ENCODE measurements at regions of chr9 and their contacts with region 1.

Region 1: DNA sequence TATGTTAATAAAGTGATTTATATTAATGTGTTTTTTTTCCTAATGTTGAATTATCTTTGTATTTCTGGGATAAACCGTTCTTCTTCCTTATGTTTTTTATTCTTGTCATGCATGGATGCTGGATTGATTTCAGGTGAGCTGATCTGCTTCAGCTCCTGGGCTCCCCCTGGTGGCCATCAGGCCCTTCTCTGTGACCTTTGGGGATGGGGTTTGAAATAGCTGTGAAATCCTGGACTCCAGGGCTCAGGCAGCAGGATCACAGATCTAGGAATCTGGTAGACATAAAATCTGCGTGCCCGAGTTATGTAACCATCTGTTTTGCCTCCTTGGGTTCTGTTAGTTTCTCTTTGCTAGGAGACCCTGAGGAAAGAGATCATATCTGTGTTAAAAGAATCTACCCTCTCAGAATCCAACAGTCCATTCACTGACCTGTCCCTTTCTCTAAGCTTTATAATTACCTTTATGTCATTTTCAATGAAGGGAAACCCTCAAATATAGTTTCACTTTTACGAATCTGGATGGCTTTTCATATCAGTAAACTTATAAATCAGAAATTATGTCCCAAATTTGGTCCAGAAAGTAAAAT is 12.2 kb upstream of the OR13J1 start:
- DNase-seq: no peak
- H3K4me3 ChIP-seq: no peak overlapping the region
- CTCF ChIP-seq: peak; percentile 93

Region 2: DNA sequence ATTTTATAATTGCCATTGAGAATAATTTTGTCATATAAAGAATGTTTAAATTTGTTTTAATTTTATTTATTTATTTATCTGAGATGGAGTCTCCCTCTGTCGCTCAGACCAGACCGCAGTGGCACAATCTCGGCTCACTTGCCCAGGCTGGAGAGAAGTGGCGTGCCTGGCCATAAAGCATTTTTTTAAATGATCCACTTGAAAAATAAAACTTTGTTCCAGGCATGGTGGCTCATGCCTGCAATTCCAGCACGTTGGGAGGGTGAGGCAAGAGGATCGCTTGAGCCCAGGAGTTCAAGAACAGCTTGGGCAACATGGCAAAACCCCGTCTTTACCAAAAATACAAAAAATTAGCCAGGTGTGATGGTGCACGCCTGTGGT is 229.5 kb before region 1 on chr9:
- CTCF ChIA-PET with region 1: no interaction called
- POLR2A ChIA-PET with region 1: no interaction called
- DNase-seq: no peak
- H3K4me3 ChIP-seq: no peak overlapping the region
- CTCF ChIP-seq: no peak

Region 3: GRCh38 chr9:35716230-35716629 is 166.1 kb before region 1 on chr9:
- CTCF ChIA-PET with region 1: no interaction called
- POLR2A ChIA-PET with region 1: no interaction called
- DNase-seq: no peak
- H3K4me3 ChIP-seq: no peak overlapping the region
- CTCF ChIP-seq: no peak

Region 4: GRCh38 chr9:35774907-35775635 is 107.3 kb before region 1 on chr9:
- CTCF ChIA-PET with region 1: interaction called, 10 read pairs
- POLR2A ChIA-PET with region 1: no interaction called
- DNase-seq: no peak
- H3K4me3 ChIP-seq: no peak overlapping the region
- CTCF ChIP-seq: no peak

Region 5: GRCh38 chr9:35829084-35829763 is 53.1 kb before region 1 on chr9 and contains the start of gene TMEM8B:
- CTCF ChIA-PET with region 1: interaction called, 90 read pairs
- POLR2A ChIA-PET with region 1: no interaction called
- DNase-seq: no peak
- H3K4me3 ChIP-seq: peak within 1 kb of the TSS; percentile 69
- CTCF ChIP-seq: no peak

Region 6: DNA sequence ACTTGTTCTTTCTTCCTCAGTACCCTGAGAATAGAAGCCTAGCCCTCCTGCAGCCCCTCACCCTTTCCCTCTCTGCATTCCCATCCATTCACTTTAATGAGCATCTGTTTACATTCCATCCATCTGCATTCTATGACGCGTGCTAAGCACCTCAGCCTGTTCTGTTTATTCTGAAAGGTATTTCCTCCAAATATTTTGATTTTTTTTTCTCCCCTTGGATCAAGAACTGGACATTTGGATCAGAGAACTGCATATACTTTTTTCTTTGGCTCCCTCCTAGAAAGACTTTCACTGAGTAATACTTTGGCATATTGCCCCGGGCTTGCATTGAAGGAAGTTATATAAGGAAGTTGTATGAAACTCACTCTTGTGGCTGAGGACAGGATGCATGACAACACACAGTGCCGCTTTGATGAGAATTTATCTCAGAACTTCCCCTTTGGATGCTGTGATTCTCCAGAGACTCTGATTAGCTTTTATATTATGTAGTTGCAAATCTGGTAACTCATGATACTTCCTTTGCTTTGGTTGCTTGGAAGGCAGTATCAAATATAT is 37.6 kb before region 1 on chr9:
- CTCF ChIA-PET with region 1: interaction called, 16 read pairs
- POLR2A ChIA-PET with region 1: no interaction called
- DNase-seq: no peak
- H3K4me3 ChIP-seq: no peak overlapping the region
- CTCF ChIP-seq: no peak

Region 7: DNA sequence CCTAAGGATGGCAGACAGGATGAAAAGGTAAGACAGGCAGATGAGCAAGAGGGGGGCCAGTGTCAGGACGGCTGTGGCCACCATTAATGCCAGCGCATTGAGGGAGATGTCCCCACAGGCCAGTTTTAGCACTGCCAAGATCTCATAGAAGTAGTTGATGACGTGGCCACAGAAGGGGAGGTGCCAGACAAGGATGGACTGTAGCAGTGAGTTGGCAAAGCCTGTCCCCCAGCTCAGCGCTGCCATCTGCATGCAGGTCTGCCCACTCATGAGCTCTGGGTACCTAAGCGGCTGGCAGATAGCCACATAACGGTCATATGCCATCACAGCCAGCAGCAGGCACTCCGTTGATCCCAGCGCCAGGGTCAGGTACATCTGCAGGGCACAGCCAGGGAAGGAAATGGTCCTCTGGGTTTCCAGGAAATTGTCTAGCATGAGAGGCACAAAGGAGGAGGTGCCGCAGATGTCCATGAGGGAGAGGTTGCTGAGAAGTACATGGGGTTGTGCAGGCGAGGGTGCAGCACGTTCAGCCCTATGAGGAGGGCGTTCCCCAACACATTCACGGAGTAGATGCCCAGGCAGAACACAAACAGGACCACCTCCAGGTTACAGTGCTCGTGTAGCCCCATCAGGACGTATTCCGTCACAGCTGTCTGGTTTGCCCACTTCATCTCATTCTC is 22.9 kb before region 1 on chr9:
- CTCF ChIA-PET with region 1: interaction called, 25 read pairs
- POLR2A ChIA-PET with region 1: interaction called, 3 read pairs
- DNase-seq: no peak
- H3K4me3 ChIP-seq: no peak overlapping the region
- CTCF ChIP-seq: no peak

Region 8: GRCh38 chr9:35903049-35903448 is 20.7 kb after region 1 on chr9:
- CTCF ChIA-PET with region 1: interaction called, 49 read pairs
- POLR2A ChIA-PET with region 1: no interaction called
- DNase-seq: no peak
- H3K4me3 ChIP-seq: no peak overlapping the region
- CTCF ChIP-seq: peak; percentile 46

Region 9: GRCh38 chr9:35945341-35946018 is 63.1 kb after region 1 on chr9:
- CTCF ChIA-PET with region 1: interaction called, 17 read pairs
- POLR2A ChIA-PET with region 1: no interaction called
- DNase-seq: no peak
- H3K4me3 ChIP-seq: no peak overlapping the region
- CTCF ChIP-seq: peak; percentile 86

Region 10: GRCh38 chr9:36341936-36342577 is 459.7 kb after region 1 on chr9:
- CTCF ChIA-PET with region 1: no interaction called
- POLR2A ChIA-PET with region 1: no interaction called
- DNase-seq: no peak
- H3K4me3 ChIP-seq: no peak overlapping the region
- CTCF ChIP-seq: no peak

Region 11: DNA sequence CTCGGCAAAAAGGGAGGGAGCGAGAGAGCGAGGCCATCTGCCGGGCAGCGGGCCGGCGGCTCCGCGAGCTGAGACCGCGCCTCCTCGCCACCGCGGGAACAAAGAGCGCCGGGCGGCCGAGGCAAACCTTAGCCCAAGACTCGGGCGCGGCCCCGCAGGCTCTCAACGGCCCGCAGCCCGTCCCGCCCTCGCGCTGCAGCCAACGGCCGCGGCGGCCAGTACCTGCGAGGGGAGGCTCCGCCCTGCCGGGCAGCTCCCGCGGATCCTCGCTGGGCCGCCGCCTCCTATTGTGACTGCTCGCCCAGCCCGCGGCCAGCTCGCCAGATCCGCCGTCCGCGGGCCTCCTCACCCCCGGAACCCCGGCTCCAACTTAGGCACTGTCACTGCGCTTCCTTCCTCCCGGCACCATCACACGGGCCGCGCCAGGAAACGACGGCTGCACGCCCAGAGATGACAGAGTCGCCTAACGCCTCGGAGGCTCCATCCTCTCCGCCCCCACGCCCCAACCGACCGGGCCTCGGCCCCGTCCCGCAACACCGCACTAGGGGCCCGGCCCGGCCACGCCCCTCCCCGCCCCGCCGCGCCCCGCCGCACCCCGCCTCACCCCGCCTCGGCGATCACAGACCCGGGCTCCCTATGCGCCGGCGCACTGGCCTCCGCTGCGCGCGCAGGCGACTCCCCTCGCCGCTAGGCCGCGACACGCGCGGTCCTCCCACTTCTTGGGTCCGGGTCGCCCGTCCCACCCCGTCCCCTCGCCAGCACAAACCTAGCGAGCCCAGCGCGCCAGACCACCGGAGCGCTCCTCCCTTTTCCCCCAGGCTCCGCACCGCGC is 518.2 kb after region 1 on chr9:
- CTCF ChIA-PET with region 1: no interaction called
- POLR2A ChIA-PET with region 1: no interaction called
- DNase-seq: no peak
- H3K4me3 ChIP-seq: peak overlapping the region; percentile 78
- CTCF ChIP-seq: no peak